ENCODE measurements at regions of chr3 and their contacts with region 1.

Region 1: DNA sequence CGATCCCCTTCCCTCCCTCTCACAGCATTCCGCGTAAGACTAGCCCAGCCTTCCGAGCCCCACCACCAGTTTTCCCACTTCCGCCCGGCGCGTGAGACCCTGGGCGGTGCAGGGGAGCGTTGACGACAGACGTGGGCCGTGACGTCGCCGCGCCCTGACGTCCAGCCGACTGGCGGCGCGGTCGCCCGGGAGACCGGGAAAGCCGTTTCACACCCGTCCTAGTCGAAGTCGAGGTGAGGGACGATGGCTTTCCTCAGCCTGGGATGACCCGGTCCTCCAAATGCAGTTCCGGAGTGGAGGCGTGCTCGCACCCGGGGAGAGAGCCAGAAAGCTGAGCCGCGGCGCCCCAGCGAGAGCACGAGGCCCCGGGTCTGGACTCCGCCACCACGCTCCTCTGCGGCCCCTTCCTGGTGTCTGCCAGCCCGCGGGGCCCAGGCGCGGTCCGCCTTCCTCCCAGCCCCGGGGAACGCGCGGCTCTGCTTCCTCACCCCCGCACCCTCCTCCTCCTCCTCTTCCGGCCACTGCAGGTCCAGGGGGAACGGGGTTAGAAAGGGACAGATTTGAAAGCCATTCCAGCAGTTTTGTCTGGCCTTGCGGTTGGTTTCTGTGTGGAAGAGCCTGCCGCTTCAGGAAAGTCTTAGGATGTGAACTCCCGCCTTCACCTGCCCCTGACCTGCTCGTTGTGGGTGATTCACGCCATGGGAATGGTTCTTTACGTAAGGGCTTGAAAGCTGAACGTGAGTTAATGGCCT is at the start of gene LEKR1:
- DNase-seq: peak; percentile 92
- H3K4me3 ChIP-seq: peak within 1 kb of the TSS; percentile 59
- H3K27ac ChIP-seq: peak within 1 kb of the TSS; percentile 92
- H3K4me1 ChIP-seq: peaks cover 39% of the 10 kb centered on the region
- H3K27me3 ChIP-seq: no peaks in the 10 kb centered on the region
- CTCF ChIP-seq: no peak
- total RNA-seq, gene LEKR1: 0.76 and 0.90 TPM in 2 replicates

Region 2: DNA sequence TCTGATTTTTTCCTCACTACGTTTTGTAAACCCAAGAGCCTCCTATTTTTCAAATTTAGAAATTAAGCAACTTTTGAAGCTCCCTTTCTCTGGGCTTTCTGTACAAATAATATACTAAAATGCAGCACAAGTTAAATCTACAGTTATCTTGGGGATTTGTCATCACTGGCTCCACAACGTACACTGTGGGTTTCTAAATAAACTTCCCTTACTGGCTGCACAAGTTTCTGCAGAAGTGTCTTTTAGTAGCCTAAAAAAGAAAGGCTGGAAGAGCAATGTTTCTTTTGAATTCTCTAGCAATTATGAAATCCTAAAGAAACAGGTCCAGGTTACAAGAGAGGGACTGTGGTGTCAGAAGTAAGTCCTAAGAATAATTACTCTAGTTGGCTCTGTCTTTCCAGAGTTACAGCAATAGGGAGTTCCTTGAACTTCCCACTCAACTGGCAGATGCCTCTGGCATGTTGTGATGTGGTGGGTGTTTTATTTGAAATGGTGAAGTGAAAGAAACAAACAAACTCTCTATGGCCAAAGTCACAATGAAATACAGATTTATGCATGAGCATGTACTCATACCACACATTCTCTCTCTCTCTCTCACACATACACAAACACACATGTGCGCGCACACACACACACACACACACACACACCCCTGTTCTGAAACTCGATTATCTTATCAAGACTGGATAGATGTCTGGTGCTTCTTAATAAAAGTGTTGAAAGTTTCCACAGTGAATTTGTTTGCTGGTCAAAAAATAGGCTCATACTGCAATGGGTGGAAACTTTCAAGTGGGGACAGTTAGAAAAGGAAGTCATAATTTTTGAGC is 469.6 kb before region 1 on chr3:
- CTCF ChIA-PET with region 1: no interaction called
- POLR2A ChIA-PET with region 1: no interaction called
- intact Hi-C with region 1: no loop called
- DNase-seq: no peak
- H3K4me3 ChIP-seq: no peak overlapping the region
- H3K27ac ChIP-seq: no peak overlapping the region
- H3K4me1 ChIP-seq: peaks cover 3% of the 10 kb centered on the region
- H3K27me3 ChIP-seq: no peaks in the 10 kb centered on the region
- CTCF ChIP-seq: no peak

Region 3: DNA sequence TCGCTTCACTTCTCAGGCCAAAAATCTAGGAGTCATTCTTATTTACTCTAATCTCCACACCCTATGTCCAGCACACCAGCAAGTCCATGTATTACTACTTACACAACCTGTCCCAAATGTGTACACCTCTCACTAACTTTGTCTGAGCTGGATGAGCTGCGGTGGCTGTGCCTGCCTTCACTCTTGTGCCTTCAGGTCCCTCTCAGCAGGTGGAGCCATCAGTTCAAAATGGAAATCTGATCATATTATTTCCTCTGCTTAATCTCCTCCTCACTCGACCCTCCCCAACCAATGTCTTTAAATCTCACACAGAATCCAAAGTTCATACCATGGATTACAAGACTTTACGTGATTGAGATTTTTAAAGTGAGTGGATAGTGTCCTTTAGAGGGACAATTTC is 354.2 kb before region 1 on chr3:
- CTCF ChIA-PET with region 1: no interaction called
- POLR2A ChIA-PET with region 1: no interaction called
- intact Hi-C with region 1: no loop called
- DNase-seq: peak; percentile 24
- H3K4me3 ChIP-seq: no peak overlapping the region
- H3K27ac ChIP-seq: no peak overlapping the region
- H3K4me1 ChIP-seq: peaks cover 23% of the 10 kb centered on the region
- H3K27me3 ChIP-seq: no peaks in the 10 kb centered on the region
- CTCF ChIP-seq: peak; percentile 37; the same call in 1 of the 2 replicates

Region 4: GRCh38 chr3:156547637-156548036 is 278.7 kb before region 1 on chr3:
- CTCF ChIA-PET with region 1: no interaction called
- POLR2A ChIA-PET with region 1: no interaction called
- intact Hi-C with region 1: loop called (anchors 10 kb)
- DNase-seq: no peak
- H3K4me3 ChIP-seq: no peak overlapping the region
- H3K27ac ChIP-seq: peak overlapping the region; percentile 88
- H3K4me1 ChIP-seq: peaks cover 94% of the 10 kb centered on the region
- H3K27me3 ChIP-seq: no peaks in the 10 kb centered on the region
- CTCF ChIP-seq: no peak

Region 5: DNA sequence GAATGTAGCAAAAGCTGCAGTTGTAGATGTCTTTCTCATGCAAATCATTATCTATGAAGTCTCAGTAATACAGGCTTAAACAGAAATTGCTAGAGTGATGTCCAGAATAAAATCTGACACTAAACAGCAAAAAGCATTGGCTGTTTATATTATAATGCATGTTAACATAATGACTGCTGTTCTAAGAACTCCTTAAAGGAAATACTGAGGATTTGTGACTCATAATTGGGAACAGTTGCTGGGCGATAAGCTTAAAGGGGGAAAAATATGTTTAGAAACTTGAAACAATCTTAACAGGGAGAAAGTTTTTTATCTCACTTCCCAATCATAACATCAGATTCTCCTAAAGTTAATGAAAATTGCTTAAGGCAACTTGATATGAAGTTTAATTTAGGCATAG is 134.4 kb before region 1 on chr3:
- CTCF ChIA-PET with region 1: no interaction called
- POLR2A ChIA-PET with region 1: no interaction called
- intact Hi-C with region 1: loop called (anchors 5 kb)
- DNase-seq: peak; percentile 80
- H3K4me3 ChIP-seq: peak overlapping the region; percentile 27
- H3K27ac ChIP-seq: peak overlapping the region; percentile 70
- H3K4me1 ChIP-seq: peaks cover 90% of the 10 kb centered on the region
- H3K27me3 ChIP-seq: no peaks in the 10 kb centered on the region
- CTCF ChIP-seq: no peak